Activated naive CD4-positive, alpha-beta T cell treated with anti-CD3 and anti-CD28 coated beads for 36 hours (primary cell): ENCODE measurements at regions of chr1 and their contacts with region 1.

Region 1: GRCh38 chr1:119987112-119987511 is 82.3 kb downstream of the NOTCH2 start:
- DNase-seq: peak; percentile 26
- H3K4me3 Mint-ChIP-seq: no peak overlapping the region
- H3K27ac Mint-ChIP-seq: peak overlapping the region; percentile 53
- H3K4me1 Mint-ChIP-seq: peaks cover 35% of the 10 kb centered on the region
- H3K27me3 Mint-ChIP-seq: no peaks in the 10 kb centered on the region

Region 2: DNA sequence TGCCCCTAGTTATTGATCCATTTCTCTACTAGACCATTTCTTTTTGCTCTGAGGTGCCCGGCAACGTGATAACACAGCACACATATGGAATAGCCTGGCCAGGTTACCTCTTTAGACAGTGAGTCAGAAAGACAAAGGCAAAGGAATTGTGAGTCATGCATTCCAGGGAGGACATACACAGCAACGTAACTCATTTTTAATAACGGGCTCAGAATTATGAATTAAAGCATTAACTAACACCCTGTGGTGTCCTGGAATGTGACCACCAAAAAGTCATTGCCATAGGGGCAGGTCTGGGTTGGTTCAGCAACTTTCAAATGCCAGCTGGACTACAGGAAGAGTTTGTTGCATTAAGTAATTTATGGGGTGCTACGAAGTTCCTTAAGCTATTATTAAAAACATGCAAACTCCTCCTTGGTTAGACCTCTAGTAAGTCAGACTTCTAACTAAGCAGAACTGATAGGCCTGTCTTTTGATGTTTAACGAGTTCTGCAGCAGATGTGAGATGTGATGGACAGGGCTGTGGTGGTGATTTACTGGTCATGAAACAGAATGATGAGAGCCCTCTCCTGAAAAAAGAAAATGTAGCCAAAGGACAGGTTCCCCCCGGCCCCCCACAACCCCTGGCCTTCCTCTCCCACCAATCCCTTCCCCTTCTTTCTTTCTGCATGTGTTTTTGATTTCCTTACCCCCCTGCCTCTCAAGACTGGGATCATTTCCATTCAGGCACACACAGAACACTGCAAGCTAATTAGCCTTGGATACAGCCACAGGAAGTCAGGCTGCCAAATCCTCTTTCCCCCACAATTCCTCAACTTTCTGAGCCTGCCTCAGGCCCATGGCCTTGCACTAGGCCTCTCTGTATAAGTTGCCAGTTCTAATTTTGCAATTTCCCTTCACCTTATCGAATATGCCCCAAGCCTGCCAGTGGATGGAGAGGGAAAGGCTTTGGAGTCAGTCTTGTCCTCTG is 707.4 kb before region 1 on chr1:
- CTCF ChIA-PET with region 1: no interaction called
- intact Hi-C with region 1: no loop called
- DNase-seq: no peak
- H3K4me3 Mint-ChIP-seq: no peak overlapping the region
- H3K27ac Mint-ChIP-seq: no peak overlapping the region
- H3K4me1 Mint-ChIP-seq: no peaks in the 10 kb centered on the region
- H3K27me3 Mint-ChIP-seq: no peaks in the 10 kb centered on the region

Region 3: GRCh38 chr1:119968068-119968492 is 19.0 kb before region 1 on chr1:
- CTCF ChIA-PET with region 1: interaction called, 21 read pairs
- intact Hi-C with region 1: no loop called
- DNase-seq: peak; percentile 92
- H3K4me3 Mint-ChIP-seq: no peak overlapping the region
- H3K27ac Mint-ChIP-seq: no peak overlapping the region
- H3K4me1 Mint-ChIP-seq: peaks cover 3% of the 10 kb centered on the region
- H3K27me3 Mint-ChIP-seq: no peaks in the 10 kb centered on the region